ENCODE measurements at regions of chr1 and their contacts with region 1.

Region 1: DNA sequence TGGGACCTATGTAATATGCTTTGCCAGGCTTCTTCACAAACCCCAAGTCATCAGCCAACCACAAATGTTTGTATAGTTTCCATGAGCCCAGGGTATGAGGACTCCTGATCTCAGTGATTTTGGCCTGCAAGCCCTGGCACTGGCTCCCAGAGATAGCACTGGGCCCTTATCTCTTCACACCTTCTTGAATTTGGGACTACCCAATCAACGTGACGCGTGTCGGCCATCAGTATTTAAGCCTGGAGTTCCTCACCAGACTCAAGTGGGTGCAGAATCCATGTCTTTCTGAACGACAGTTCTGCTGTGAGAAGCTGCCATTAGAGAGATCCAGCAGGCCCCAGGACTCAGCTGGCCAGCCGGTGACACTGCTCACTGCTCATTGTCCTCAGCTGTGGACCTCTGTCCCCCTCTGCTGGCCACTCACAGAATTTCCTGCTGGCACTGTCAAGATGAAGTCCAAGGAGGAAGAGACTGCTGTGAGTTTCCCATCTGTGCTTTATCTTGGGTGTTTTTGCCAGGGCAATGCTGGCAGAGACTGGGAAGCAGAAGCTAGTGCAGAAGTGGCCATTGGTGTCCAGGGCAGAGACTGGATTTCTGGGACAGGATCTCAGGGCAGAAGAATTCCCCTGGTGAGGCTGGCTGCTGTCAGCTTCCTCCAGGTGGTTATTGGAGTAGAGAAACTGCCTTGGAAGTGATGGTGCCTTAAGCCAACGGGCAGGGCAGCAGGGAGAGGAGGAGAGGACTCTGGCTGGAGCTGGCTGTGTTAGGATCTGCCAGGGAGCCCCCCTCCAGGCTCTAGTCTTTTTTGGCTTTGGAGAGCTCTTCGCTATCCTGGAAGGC is 28.4 kb downstream of the TMCC2 start:
- DNase-seq: peak; percentile 93 to 99 (median 96)
- H3K4me3 ChIP-seq: peak overlapping the region in 14 of 59 donors; percentile 0 to 35 (median 14)
- H3K27ac ChIP-seq: peak overlapping the region; percentile 49 to 100 (median 97)
- H3K27me3 ChIP-seq: no peaks in the 10 kb centered on the region
- CTCF ChIP-seq: peak; percentile 86 to 100 (median 98)

Region 2: GRCh38 chr1:204989266-204990058 is 266.7 kb before region 1 on chr1:
- intact Hi-C with region 1: loop called in 1 of 2 experiments (anchors 10 kb)
- DNase-seq: peak; percentile 73 to 89 (median 86)
- H3K4me3 ChIP-seq: peak overlapping the region in 3 of 59 donors; percentile 16 to 31 (median 22)
- H3K27ac ChIP-seq: peak overlapping the region; percentile 85 to 100 (median 98)
- H3K27me3 ChIP-seq: no peaks in the 10 kb centered on the region
- CTCF ChIP-seq: peak; percentile 84 to 99 (median 96)

Region 3: GRCh38 chr1:205061665-205062069 is 194.5 kb before region 1 on chr1:
- intact Hi-C with region 1: loop called in 1 of 2 experiments (anchors 5 kb)
- DNase-seq: peak; percentile 83 to 95 (median 89)
- H3K4me3 ChIP-seq: peak overlapping the region in 13 of 59 donors; percentile 3 to 39 (median 31)
- H3K27ac ChIP-seq: peak overlapping the region in 58 of 59 donors; percentile 33 to 100 (median 81)
- H3K27me3 ChIP-seq: no peaks in the 10 kb centered on the region
- CTCF ChIP-seq: peak; percentile 68 to 96 (median 89)

Region 4: GRCh38 chr1:205121660-205122488 is 134.3 kb before region 1 on chr1 and contains the start of gene RBBP5:
- intact Hi-C with region 1: loop called (anchors 1 to 10 kb)
- DNase-seq: peak; percentile 92 to 97 (median 95)
- H3K4me3 ChIP-seq: peak within 1 kb of the TSS; percentile 72 to 100 (median 92)
- H3K27ac ChIP-seq: peak within 1 kb of the TSS; percentile 86 to 100 (median 98)
- H3K27me3 ChIP-seq: no peaks in the 10 kb centered on the region
- CTCF ChIP-seq: peak; percentile 39 to 91 (median 75)
- total RNA-seq, gene RBBP5: 14.3 to 46.6 (median 24.8) TPM

Region 5: GRCh38 chr1:205141236-205142101 is 114.7 kb before region 1 on chr1:
- intact Hi-C with region 1: loop called in 1 of 2 experiments (anchors 5 kb)
- DNase-seq: peak; percentile 47 to 88 (median 72)
- H3K4me3 ChIP-seq: peak overlapping the region in 32 of 59 donors; percentile 1 to 52 (median 23)
- H3K27ac ChIP-seq: peak overlapping the region in 45 of 59 donors; percentile 13 to 71 (median 46)
- H3K27me3 ChIP-seq: no peaks in the 10 kb centered on the region
- CTCF ChIP-seq: peak; percentile 64 to 92 (median 84)

Region 6: DNA sequence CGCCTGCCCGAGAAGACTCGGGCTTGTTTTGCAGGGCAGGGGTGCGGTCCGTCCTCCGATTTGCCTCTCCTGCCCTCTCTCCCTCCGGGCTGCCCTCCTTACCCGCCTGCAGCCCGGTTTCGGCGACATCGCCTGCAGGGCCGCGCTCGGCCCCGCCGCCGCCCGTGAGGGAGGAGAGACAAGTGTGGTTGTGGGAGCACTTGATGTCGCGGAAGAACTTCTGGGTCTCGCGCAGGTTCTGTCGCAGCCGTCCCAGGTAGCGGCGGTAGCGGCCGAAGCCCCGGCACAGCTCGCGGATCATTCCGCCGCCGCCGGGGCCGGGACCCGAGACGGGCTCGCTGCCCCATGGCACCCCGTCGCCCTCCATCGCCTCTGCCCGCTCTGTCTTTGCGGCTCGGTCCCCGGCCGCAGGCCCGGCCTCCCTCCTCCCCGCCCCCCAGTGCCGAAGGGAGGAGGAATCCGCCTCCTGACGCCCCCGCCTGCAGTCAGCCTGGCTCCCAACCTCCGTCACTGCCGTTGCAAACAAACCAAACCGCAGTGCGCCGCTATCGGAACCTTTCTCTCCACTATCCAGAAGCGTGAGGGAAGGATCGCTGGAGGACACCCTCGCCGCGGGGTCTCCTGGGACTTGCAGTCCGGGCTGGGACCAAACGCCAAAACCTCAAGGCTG is 44.9 kb before region 1 on chr1 and contains the start of gene DSTYK:
- intact Hi-C with region 1: loop called in 1 of 2 experiments (anchors 5 kb)
- DNase-seq: peak; percentile 90 to 97 (median 95)
- H3K4me3 ChIP-seq: peak within 1 kb of the TSS; percentile 67 to 100 (median 96)
- H3K27ac ChIP-seq: peak within 1 kb of the TSS; percentile 78 to 99 (median 94)
- H3K27me3 ChIP-seq: no peaks in the 10 kb centered on the region
- CTCF ChIP-seq: peak in 40 of 56 donors; percentile 10 to 60 (median 40)
- total RNA-seq, gene DSTYK: 28.0 to 49.3 (median 39.9) TPM

Region 7: GRCh38 chr1:205227584-205228006 is 28.6 kb before region 1 on chr1 and contains the start of gene TMCC2:
- intact Hi-C with region 1: loop called in 1 of 2 experiments (anchors 1 kb)
- DNase-seq: peak; percentile 91 to 99 (median 95)
- H3K4me3 ChIP-seq: peak within 1 kb of the TSS; percentile 67 to 90 (median 78)
- H3K27ac ChIP-seq: peak within 1 kb of the TSS; percentile 70 to 100 (median 92)
- H3K27me3 ChIP-seq: no peaks in the 10 kb centered on the region
- CTCF ChIP-seq: peak in 11 of 56 donors; percentile 8 to 46 (median 21)
- total RNA-seq, gene TMCC2: 52.9 to 143 (median 93.9) TPM

Region 8: DNA sequence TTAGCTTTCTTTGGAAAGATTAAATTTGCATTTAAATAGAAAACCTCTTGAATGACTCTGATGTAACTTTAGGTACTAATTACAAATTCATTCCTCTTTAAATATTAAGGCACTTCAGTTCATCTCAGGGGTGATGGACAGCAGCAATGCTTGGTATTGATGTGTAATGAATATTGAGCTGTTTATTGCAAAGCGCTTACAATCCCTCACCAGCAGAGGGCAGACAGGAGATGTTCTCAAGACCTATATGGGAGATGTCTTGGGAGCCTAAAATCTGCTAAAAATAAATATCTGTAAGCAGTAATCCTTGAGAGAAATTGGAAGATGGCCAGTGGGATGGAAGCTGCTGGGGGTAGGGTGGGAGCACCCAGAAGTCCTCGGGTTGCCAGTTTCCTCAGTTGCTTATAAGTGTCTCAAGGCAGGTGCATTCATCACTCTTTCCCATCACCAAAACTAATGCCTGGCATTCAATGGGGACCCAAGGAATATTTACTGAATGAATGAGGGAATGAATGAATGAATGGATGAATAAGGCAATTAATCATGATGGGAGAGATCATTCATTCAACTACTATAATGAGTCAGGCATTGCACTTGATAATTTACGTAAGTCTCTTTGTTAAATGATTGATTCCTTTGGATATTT is 98.2 kb after region 1 on chr1:
- intact Hi-C with region 1: no loop called
- DNase-seq: peak in 5 of 10 donors; percentile 52 to 83 (median 66)
- H3K4me3 ChIP-seq: no peak overlapping the region
- H3K27ac ChIP-seq: peak overlapping the region in 3 of 59 donors; percentile 22 to 40 (median 36)
- H3K27me3 ChIP-seq: no peaks in the 10 kb centered on the region
- CTCF ChIP-seq: peak; percentile 72 to 95 (median 86)